ENCODE measurements at regions of chr3 and their contacts with region 1.

Region 1: GRCh38 chr3:136042608-136043221 is 77.2 kb downstream of the PPP2R3A start:
- DNase-seq: no peak
- H3K4me3 Mint-ChIP-seq: no peak overlapping the region
- H3K27ac Mint-ChIP-seq: no peak overlapping the region
- H3K4me1 Mint-ChIP-seq: no peaks in the 10 kb centered on the region
- H3K27me3 Mint-ChIP-seq: peaks cover 11% of the 10 kb centered on the region

Region 2: DNA sequence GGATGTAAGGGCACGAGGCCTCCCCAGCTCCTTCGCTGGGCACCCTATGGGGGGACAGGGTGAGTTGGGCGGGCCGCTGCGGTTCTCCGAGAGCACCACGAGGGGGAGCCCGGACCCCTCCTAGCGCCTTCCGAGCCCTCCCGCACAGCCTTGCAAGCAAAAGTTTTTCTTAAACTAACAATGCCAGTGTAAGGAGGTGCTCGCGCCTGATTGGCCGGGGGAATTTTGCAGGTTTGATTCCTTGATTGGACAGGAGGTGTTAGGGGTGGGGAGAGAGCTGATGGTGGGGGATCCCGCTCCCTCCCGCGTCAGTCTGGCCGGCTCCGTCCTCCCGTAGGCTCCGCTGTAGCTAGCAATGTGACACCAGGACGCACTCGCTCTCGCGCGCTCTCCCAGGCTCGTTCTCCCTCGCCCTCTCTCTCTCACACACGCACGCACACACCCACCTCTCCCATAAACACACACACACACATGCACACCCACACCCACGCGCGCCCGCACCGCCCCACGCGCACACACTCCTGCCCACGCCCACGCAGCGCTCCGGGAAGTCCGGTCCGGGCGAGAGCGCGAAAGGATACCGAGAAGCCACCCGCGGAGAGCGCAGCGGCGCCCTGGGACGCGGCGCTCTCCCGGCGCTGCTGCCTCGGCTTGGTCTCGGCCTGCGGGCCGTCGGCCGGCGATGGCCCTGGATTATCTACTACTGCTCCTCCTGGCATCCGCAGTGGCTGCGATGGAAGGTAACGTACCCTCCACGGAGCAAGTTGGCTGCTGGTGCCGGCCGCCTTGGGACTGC is 1247.6 kb before region 1 on chr3 and contains the start of gene EPHB1:
- CTCF ChIA-PET with region 1: no interaction called
- intact Hi-C with region 1: loop called (anchors 1 kb)
- DNase-seq: peak; percentile 76
- H3K4me3 Mint-ChIP-seq: peak within 1 kb of the TSS; percentile 67
- H3K27ac Mint-ChIP-seq: no peak within 1 kb of the TSS
- H3K4me1 Mint-ChIP-seq: peaks cover 9% of the 10 kb centered on the region
- H3K27me3 Mint-ChIP-seq: peaks cover 47% of the 10 kb centered on the region
- total RNA-seq, gene EPHB1: 0.32 TPM in 1 of 2 experiments, not detected in the other

Region 3: DNA sequence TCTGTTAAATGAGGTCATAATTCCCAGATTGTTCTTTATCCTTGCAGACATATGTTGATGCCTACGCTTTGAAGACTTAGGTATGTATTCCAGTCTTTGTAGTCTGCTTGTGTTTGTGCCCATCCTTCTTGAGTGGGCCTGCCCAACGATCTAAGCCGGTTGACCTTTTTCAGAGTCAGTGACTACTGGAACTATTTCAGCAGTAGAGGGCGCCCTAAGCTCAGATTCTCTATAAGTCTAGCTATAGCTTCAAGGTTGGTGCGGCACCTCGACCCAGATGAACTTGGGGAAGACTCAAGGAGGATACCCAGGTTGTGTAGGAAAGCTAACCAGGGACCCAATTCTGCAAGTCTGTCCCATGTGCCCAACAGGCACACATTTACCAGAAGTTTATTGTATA is 306.0 kb before region 1 on chr3:
- CTCF ChIA-PET with region 1: interaction called, 3 read pairs
- intact Hi-C with region 1: loop called (anchors 5 kb)
- DNase-seq: peak; percentile 8
- H3K4me3 Mint-ChIP-seq: no peak overlapping the region
- H3K27ac Mint-ChIP-seq: no peak overlapping the region
- H3K4me1 Mint-ChIP-seq: no peaks in the 10 kb centered on the region
- H3K27me3 Mint-ChIP-seq: peaks cover 2% of the 10 kb centered on the region

Region 4: DNA sequence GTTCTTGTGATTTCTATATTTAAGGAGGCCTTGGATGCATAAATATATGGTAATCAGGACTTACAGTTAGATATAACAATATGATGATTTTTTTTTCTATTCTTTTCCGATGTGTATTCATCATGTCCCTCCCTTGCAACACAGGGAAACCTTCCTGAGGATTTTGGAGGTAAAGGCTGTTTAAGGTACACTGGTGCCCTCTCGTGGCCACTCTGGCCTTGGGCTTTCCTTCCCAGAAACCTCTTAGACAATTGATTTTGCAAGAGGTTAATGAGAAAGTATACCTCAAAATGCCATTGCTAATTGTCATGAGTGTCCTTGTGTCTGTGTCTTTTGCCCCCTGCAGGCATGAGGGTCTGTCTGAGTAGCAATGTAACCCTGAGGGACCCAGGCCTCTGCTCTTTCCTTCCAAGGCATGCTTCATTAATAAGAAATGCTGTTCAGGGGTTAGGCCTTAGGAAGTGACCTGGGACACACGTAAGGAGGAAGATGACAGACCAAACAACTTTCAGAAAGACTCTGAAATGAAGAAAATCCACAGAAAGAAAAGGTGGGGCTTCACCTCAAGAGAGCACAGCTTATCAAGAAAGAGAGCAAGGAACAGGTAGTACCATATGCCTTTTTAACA is 147.5 kb before region 1 on chr3:
- CTCF ChIA-PET with region 1: interaction called, 5 read pairs
- intact Hi-C with region 1: loop called (anchors 5 kb)
- DNase-seq: peak; percentile 69
- H3K4me3 Mint-ChIP-seq: no peak overlapping the region
- H3K27ac Mint-ChIP-seq: no peak overlapping the region
- H3K4me1 Mint-ChIP-seq: no peaks in the 10 kb centered on the region
- H3K27me3 Mint-ChIP-seq: peaks cover 3% of the 10 kb centered on the region

Region 5: DNA sequence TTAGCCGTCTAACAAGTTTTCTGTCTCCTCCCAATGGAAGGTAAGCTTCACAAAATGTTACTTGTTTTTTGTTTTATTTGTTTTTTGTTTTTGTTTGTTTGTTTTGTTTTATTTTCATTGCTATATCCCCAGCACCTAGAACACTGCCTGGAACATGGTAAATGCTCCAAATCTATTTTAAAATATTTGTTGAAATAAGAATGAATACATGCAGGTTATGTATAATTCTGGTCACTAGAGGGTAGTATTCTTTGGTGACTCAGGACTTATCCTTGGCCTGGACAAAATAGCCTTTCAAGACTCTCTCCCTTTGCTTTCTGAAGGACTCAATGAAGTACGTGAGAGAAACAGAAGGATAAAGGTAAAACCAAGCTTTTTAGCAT is 124.1 kb before region 1 on chr3:
- CTCF ChIA-PET with region 1: interaction called, 5 read pairs
- intact Hi-C with region 1: loop called (anchors 1 kb)
- DNase-seq: no peak
- H3K4me3 Mint-ChIP-seq: no peak overlapping the region
- H3K27ac Mint-ChIP-seq: no peak overlapping the region
- H3K4me1 Mint-ChIP-seq: no peaks in the 10 kb centered on the region
- H3K27me3 Mint-ChIP-seq: peaks cover 7% of the 10 kb centered on the region

Region 6: GRCh38 chr3:135965506-135966270 is 77.0 kb before region 1 on chr3 and contains the start of gene PPP2R3A:
- CTCF ChIA-PET with region 1: interaction called, 4 read pairs
- intact Hi-C with region 1: loop called (anchors 2 kb)
- DNase-seq: peak; percentile 70
- H3K4me3 Mint-ChIP-seq: peak within 1 kb of the TSS; percentile 74
- H3K27ac Mint-ChIP-seq: no peak within 1 kb of the TSS
- H3K4me1 Mint-ChIP-seq: peaks cover 8% of the 10 kb centered on the region
- H3K27me3 Mint-ChIP-seq: peaks cover 37% of the 10 kb centered on the region
- total RNA-seq, gene PPP2R3A: 0.17 TPM